Heart left ventricle (tissue), 16 donors: ENCODE measurements at regions of chr9 and their contacts with region 1.

Region 1: DNA sequence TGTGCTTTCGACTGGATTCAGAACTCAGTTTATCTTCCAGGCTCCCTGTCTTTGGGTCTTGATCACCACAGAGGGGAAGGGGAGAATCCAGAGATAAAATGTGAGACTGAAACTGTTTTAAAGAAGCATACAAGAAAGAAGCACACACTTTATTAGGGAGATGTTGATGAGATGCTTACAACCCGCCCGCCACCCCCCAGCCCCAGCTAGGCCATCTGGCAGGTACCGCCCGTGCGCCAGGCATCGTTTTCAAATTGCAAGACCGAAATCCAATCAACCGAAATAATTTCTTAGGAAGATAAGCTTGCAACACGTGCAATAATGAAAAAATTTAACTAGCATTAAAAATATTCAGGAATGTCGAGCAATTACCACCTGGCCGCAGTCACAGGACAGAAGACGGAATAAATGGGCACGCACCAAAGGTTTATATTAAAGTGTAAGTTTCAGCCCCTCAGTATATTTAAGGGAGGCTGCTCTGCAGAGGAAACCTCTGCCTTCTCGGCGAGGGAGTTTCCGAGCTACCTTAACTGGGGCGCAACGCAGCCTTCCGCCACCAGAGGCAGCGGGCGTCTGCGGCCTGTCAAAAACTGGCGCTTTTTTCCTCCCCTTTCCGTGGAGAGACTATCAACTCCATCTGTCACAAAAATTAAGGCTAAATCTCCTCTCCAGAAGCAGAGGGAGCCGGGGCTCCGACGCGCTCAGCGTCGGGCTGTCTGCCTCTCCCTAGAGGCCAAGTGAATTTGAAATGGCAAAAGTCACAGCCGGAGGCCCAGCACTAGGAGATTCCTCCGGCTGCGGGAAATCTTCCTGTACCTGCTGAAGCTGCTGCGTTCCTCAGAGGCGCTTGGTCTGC is 996 bp upstream of the GAS1 start:
- DNase-seq: peak; percentile 76 to 88 (median 81)
- ATAC-seq: peak; percentile 65 to 84 (median 78)
- H3K4me3 ChIP-seq: peak overlapping the region; percentile 51 to 92 (median 80)
- H3K27ac ChIP-seq: peak overlapping the region; percentile 48 to 95 (median 92)
- H3K4me1 ChIP-seq: peaks cover 0 to 34% (median 6%) of the 10 kb centered on the region in 12 donors
- H3K27me3 ChIP-seq: peaks cover 0 to 28% (median 0%) of the 10 kb centered on the region in 9 donors
- CTCF ChIP-seq: peak; percentile 64 to 96 (median 84)
- POLR2A ChIP-seq: peak in 1 of 2 donors; percentile 29

Region 2: GRCh38 chr9:86614871-86615849 is 333.1 kb before region 1 on chr9:
- intact Hi-C with region 1: loop called in 1 of 10 experiments (anchors 10 kb)
- DNase-seq: no peak
- ATAC-seq: no peak
- H3K4me3 ChIP-seq: no peak overlapping the region
- H3K27ac ChIP-seq: no peak overlapping the region
- H3K4me1 ChIP-seq: peaks cover 0 to 8% (median 0%) of the 10 kb centered on the region in 12 donors
- H3K27me3 ChIP-seq: no peaks in the 10 kb centered on the region
- CTCF ChIP-seq: peak; percentile 19 to 56 (median 41)
- POLR2A ChIP-seq: no peak

Region 3: GRCh38 chr9:86732514-86733171 is 215.7 kb before region 1 on chr9:
- intact Hi-C with region 1: loop called in 2 of 10 experiments (anchors 10 kb)
- DNase-seq: peak in 1 of 5 donors; percentile 41
- ATAC-seq: peak; percentile 65 to 80 (median 76)
- H3K4me3 ChIP-seq: no peak overlapping the region
- H3K27ac ChIP-seq: peak overlapping the region in 10 of 12 donors; percentile 17 to 67 (median 44)
- H3K4me1 ChIP-seq: peaks cover 0 to 13% (median 0%) of the 10 kb centered on the region in 12 donors
- H3K27me3 ChIP-seq: no peaks in the 10 kb centered on the region
- CTCF ChIP-seq: no peak
- POLR2A ChIP-seq: no peak

Region 4: GRCh38 chr9:86893811-86894490 is 54.4 kb before region 1 on chr9:
- intact Hi-C with region 1: no loop called
- DNase-seq: no peak
- ATAC-seq: no peak
- H3K4me3 ChIP-seq: no peak overlapping the region
- H3K27ac ChIP-seq: no peak overlapping the region
- H3K4me1 ChIP-seq: no peaks in the 10 kb centered on the region
- H3K27me3 ChIP-seq: no peaks in the 10 kb centered on the region
- CTCF ChIP-seq: no peak
- POLR2A ChIP-seq: no peak

Region 5: DNA sequence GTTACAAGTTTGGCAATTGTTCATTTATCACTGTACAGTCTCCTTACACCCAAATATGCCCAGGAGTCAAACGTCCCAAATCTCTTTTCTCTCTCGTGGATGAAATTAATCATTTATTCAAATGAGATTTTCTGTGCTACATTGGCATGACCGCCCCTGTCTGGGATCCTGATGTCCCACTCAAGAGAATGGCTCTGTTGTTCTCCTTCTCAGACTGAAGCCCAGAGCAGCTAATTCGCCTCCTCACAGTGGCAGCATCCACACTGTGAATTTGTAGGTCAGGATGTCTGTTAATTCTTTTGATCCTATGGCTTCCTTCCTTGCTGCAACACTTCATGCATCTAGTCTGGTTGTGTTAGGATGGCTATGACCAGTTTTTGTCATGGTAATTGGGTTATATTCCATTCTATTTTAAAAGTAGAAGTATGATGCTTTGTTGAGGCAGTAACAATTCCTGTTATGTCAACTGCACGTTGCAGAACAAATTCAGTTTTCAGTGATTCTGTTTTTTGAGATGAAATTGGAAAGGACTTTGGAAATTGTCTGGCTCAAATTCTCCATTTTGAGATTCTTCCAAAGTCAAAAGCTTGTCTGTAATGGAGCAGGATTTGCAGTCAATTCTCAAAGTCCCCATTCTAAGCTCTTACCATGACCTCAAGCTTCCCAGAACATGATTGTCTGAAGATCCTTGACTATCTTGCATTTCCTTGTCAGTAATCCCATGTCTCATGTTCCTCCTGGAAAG is 140.5 kb after region 1 on chr9:
- intact Hi-C with region 1: loop called in 3 of 10 experiments (anchors 5 to 10 kb)
- DNase-seq: no peak
- ATAC-seq: no peak
- H3K4me3 ChIP-seq: no peak overlapping the region
- H3K27ac ChIP-seq: peak overlapping the region in 6 of 12 donors; percentile 33 to 77 (median 56)
- H3K4me1 ChIP-seq: peaks cover 0 to 24% (median 12%) of the 10 kb centered on the region in 12 donors
- H3K27me3 ChIP-seq: no peaks in the 10 kb centered on the region
- CTCF ChIP-seq: no peak
- POLR2A ChIP-seq: no peak

Region 6: DNA sequence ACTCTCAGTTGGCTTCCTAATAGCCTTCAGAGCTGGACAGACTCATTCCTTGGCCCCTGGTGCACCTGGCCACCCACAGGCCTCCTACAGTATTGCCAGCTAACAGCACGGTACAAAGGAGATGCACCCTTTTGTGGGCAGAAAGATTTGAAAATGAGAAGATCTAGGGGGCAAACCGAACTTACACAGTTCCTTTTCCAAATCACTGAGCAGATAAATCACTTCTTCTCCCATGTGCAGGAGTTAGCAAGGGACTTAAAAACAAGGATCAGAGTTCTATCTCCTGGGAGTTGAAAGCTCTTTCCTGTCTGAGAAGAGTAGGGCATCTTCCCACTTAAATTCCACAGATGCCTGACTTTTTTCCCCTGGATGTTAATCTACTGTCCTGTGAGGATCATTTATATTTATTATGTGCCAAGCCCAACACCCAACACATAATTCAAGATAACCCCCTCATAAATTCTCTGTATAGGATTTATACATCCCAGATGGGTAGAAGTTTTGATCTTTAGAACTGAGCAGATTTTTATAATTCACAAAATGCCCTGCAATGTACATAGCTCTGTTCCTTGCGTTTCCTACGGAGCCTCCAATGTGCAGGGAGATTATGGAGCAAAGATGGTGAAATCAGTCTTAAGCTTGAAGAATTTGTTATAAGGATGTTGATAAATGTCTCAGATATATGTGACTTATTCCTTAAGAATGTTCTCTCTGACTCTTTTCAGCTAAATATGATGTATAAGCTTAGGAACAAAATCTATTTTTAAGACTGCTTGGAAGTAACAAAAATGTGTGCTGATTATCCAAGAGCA is 342.1 kb after region 1 on chr9:
- intact Hi-C with region 1: loop called in 1 of 10 experiments (anchors 10 kb)
- DNase-seq: no peak
- ATAC-seq: no peak
- H3K4me3 ChIP-seq: no peak overlapping the region
- H3K27ac ChIP-seq: no peak overlapping the region
- H3K4me1 ChIP-seq: peaks cover 0 to 2% (median 0%) of the 10 kb centered on the region in 12 donors
- H3K27me3 ChIP-seq: no peaks in the 10 kb centered on the region
- CTCF ChIP-seq: peak in 1 of 12 donors; percentile 15
- POLR2A ChIP-seq: no peak